T-cell (primary cell): ENCODE measurements at regions of chr1 and their contacts with region 1.

Region 1: DNA sequence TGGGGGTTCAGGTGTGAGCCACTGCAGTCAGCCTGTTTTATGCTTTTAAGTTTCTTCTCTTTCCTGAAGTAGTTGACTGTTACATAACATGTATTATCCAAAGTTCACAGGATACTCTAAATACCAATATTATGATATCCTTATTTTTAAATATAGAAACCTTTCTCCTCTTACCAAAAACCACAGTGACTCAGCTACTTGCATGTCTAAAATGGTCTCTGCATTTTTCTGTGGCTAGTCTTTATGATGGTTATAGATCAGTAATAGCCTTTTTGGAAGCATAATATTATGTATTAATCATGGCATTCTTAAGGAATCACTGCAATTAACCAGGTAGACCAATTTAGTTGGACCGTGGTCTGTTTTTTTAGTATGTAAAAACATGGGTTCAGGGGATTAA is 210.8 kb upstream of the CACYBP start:
- DNase-seq: no peak
- ATAC-seq: no peak
- H3K4me3 ChIP-seq: no peak overlapping the region
- H3K4me3 Mint-ChIP-seq: no peak overlapping the region
- H3K27ac ChIP-seq: no peak overlapping the region
- H3K27ac Mint-ChIP-seq: no peak overlapping the region
- H3K4me1 ChIP-seq: peaks cover 0 to 4% of the 10 kb centered on the region in 2 experiments
- H3K4me1 Mint-ChIP-seq: peaks cover 6 to 24% (median 17%) of the 10 kb centered on the region in 3 donors
- H3K27me3 ChIP-seq: no peaks in the 10 kb centered on the region
- H3K27me3 Mint-ChIP-seq: no peaks in the 10 kb centered on the region

Region 2: DNA sequence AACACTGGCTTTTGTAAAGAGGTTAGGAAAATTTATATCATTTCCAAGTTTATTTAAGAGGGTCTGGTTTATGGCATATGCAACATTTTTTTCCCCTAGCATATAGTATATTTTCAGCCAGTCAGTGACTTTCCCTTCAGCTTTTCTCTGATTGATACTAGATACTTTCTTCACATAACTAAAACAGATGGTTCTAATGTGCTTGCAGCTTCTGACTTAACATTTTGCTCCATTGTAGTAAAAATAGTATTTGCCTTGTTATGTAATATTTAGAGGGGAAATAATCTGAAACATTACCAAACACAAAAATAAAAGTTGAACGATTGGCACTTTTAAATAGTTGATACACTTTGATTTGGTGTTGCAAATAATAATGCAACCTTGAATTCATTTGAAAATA is 149.5 kb before region 1 on chr1:
- CTCF ChIA-PET with region 1: no interaction called
- POLR2A ChIA-PET with region 1: no interaction called
- DNase-seq: no peak
- ATAC-seq: no peak
- H3K4me3 ChIP-seq: no peak overlapping the region
- H3K4me3 Mint-ChIP-seq: no peak overlapping the region
- H3K27ac ChIP-seq: no peak overlapping the region
- H3K27ac Mint-ChIP-seq: no peak overlapping the region
- H3K4me1 ChIP-seq: peaks cover 0 to 4% of the 10 kb centered on the region in 2 experiments
- H3K4me1 Mint-ChIP-seq: peaks cover 0 to 12% (median 2%) of the 10 kb centered on the region in 3 donors
- H3K27me3 ChIP-seq: no peaks in the 10 kb centered on the region
- H3K27me3 Mint-ChIP-seq: no peaks in the 10 kb centered on the region

Region 3: GRCh38 chr1:174809755-174810280 is 20.8 kb after region 1 on chr1:
- CTCF ChIA-PET with region 1: no interaction called
- POLR2A ChIA-PET with region 1: interaction called in 1 of 2 experiments, 10 read pairs
- DNase-seq: no peak
- ATAC-seq: no peak
- H3K4me3 ChIP-seq: no peak overlapping the region
- H3K4me3 Mint-ChIP-seq: no peak overlapping the region
- H3K27ac ChIP-seq: no peak overlapping the region
- H3K27ac Mint-ChIP-seq: no peak overlapping the region
- H3K4me1 ChIP-seq: no peaks in the 10 kb centered on the region
- H3K4me1 Mint-ChIP-seq: peaks cover 0 to 11% (median under 1%) of the 10 kb centered on the region in 3 donors
- H3K27me3 ChIP-seq: no peaks in the 10 kb centered on the region
- H3K27me3 Mint-ChIP-seq: no peaks in the 10 kb centered on the region